ENCODE measurements at regions of chr7 and their contacts with region 1.

Region 1: GRCh38 chr7:27160546-27161213 is 4.2 kb upstream of the HOXA7 start:
- DNase-seq: peak; percentile 90 to 96
- ATAC-seq: peak; percentile 84
- H3K4me3 ChIP-seq: peak overlapping the region; percentile 33 to 45
- H3K27ac ChIP-seq: no peak overlapping the region
- H3K4me1 ChIP-seq: no peaks in the 10 kb centered on the region
- H3K27me3 ChIP-seq: no peaks in the 10 kb centered on the region

Region 2: DNA sequence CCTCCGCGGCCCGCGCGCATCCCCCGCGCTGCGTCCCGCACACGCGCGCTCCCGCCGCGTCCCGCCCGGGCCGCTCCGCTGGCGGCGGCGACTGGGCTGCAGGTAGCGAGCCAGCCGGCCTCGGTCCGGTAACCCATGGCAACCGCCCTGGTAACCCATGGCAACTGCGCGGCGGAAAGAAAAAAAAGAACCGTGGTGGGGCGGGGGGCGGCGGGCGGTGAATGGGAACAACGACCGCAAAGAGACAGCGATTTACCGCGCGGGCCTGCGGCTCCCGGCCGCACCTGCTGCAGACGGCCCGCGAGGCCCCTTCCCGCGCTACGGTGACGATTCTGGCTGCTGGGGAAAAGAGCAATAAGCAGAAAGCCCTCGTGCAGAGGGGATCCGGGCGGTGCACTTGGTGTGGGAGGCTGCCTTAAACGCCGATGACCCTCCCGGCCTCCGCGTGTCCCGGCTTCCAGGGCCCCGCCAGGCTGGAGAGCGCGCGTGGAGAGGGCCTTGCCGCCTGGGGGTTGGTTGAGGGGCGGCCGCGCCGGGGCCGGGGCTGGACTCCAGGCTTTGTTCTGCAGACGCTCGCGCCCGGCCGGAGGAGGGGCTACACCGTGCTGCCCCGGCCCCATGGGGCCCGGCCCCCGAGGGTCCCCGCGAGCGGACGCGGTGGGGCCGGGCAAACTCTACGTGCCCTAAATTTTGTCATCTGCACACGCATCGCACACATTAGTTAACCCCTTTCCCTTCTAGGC is 784.3 kb before region 1 on chr7:
- intact Hi-C with region 1: loop called (anchors 2 to 5 kb)
- DNase-seq: peak; percentile 51 to 77
- ATAC-seq: peak; percentile 80
- H3K4me3 ChIP-seq: no peak overlapping the region
- H3K27ac ChIP-seq: no peak overlapping the region
- H3K4me1 ChIP-seq: no peaks in the 10 kb centered on the region
- H3K27me3 ChIP-seq: peaks cover 0 to 3% of the 10 kb centered on the region in 2 donors

Region 3: DNA sequence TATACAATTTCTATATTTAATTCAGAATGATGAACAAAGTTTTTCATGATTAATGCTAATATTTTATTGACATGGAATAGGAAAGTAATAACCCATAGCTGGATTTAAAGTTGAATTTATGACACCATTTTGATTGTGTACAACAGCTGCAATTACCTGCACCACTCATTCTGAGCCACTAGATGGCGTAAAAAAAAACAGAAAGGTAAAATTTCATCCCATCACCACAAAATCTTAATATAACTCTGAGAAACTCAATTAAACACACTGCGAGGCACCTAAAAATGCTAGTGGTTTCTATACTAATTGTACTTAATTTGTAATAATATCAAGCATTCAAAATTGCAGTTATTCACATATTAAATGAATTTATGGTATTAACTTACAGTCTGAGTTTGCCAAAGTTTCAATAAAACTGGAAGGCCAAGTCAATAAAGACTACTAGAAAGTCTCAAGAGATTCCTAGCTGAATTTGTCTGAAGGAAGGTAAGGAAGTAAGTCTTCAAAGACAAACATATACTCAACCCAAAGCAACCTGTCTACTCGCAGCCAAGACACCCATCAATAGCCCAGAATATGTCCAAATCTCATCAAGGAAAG is 478.8 kb before region 1 on chr7:
- intact Hi-C with region 1: loop called (anchors 5 kb)
- DNase-seq: no peak
- ATAC-seq: peak; percentile 57
- H3K4me3 ChIP-seq: no peak overlapping the region
- H3K27ac ChIP-seq: no peak overlapping the region
- H3K4me1 ChIP-seq: no peaks in the 10 kb centered on the region
- H3K27me3 ChIP-seq: no peaks in the 10 kb centered on the region

Region 4: GRCh38 chr7:27210441-27211083 is 49.9 kb after region 1 on chr7:
- intact Hi-C with region 1: no loop called
- DNase-seq: peak; percentile 55 to 85
- ATAC-seq: peak; percentile 76
- H3K4me3 ChIP-seq: no peak overlapping the region
- H3K27ac ChIP-seq: no peak overlapping the region
- H3K4me1 ChIP-seq: no peaks in the 10 kb centered on the region
- H3K27me3 ChIP-seq: no peaks in the 10 kb centered on the region